OCI-LY7 (cell line): ENCODE measurements at regions of chr17 and their contacts with region 1.

Region 1: GRCh38 chr17:3048767-3049471 is 14.5 kb downstream of the OR1D5 start:
- DNase-seq: peak; percentile 99
- H3K4me3 ChIP-seq: peak overlapping the region; percentile 81
- H3K27ac ChIP-seq: peak overlapping the region; percentile 52
- H3K4me1 ChIP-seq: peaks cover 15% of the 10 kb centered on the region
- CTCF ChIP-seq: peak; percentile 94

Region 2: DNA sequence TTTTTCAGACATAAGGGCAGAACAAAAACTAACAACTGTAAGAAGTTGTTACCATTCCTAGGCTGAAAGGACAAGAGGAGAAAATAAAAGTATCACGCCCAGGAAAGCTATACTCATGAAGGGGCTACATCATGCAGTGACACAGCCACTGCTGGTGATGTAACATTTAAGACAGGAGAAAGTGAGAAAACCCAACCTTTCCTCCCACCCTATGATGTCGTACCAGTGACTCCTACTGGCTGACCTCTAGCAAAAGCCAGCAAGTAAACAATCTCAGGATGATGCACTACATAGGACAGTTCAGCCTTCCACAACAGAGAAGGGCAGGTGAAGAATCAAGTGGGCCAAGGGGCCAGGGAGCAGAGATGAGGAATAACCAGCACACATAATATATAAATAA is 398.7 kb after region 1 on chr17:
- CTCF ChIA-PET with region 1: no interaction called
- POLR2A ChIA-PET with region 1: no interaction called
- intact Hi-C with region 1: loop called (anchors 5 kb)
- DNase-seq: peak; percentile 25
- H3K4me3 ChIP-seq: no peak overlapping the region
- H3K27ac ChIP-seq: no peak overlapping the region
- H3K4me1 ChIP-seq: no peaks in the 10 kb centered on the region
- CTCF ChIP-seq: peak; percentile 72

Region 3: GRCh38 chr17:3535253-3535995 is 486.5 kb after region 1 on chr17:
- CTCF ChIA-PET with region 1: no interaction called
- POLR2A ChIA-PET with region 1: no interaction called
- intact Hi-C with region 1: loop called (anchors 5 kb)
- DNase-seq: peak; percentile 25
- H3K4me3 ChIP-seq: no peak overlapping the region
- H3K27ac ChIP-seq: no peak overlapping the region
- H3K4me1 ChIP-seq: no peaks in the 10 kb centered on the region
- CTCF ChIP-seq: peak; percentile 56

Region 4: DNA sequence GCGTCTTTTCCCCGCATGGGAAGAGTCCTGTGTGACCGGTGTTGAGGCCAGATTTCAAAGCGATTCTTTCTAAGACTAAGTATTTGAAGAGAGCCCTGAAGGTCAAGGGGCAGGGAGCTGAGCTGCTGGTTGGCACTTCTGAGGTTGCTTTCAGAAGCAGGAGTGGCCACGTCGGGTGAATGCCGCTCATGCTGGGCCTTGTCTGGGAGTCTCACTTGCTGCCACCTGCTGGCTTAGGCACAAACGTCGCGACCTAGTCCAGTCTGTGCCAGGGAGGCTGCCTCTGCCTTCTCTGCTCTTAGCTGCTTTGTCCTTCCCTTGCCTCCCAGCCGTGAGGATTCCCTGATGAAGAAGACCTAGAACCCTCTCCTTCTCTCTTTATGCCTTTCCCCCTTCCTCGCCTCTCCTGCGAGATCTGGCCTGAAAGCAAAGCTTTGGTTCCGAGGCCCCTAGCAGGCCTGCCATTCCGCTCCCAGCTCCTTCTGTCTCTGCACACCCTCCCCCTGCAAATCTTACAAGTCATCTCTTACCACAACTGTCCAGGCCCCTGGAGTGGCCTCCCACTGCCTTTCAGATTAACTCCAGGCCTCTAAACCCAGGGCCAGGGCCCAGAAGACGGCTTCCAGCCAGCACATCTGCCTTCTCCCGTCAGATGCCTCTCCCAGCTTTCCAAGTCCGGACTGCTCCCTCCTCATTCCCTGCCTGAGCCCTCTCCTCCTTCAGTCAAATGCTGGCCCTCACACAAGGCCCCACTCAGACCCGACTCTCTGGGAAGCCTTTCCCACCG is 599.0 kb after region 1 on chr17:
- CTCF ChIA-PET with region 1: no interaction called
- POLR2A ChIA-PET with region 1: no interaction called
- intact Hi-C with region 1: loop called (anchors 5 kb)
- DNase-seq: peak; percentile 78
- H3K4me3 ChIP-seq: no peak overlapping the region
- H3K27ac ChIP-seq: no peak overlapping the region
- H3K4me1 ChIP-seq: peaks cover 32% of the 10 kb centered on the region
- CTCF ChIP-seq: peak; percentile 76

Region 5: DNA sequence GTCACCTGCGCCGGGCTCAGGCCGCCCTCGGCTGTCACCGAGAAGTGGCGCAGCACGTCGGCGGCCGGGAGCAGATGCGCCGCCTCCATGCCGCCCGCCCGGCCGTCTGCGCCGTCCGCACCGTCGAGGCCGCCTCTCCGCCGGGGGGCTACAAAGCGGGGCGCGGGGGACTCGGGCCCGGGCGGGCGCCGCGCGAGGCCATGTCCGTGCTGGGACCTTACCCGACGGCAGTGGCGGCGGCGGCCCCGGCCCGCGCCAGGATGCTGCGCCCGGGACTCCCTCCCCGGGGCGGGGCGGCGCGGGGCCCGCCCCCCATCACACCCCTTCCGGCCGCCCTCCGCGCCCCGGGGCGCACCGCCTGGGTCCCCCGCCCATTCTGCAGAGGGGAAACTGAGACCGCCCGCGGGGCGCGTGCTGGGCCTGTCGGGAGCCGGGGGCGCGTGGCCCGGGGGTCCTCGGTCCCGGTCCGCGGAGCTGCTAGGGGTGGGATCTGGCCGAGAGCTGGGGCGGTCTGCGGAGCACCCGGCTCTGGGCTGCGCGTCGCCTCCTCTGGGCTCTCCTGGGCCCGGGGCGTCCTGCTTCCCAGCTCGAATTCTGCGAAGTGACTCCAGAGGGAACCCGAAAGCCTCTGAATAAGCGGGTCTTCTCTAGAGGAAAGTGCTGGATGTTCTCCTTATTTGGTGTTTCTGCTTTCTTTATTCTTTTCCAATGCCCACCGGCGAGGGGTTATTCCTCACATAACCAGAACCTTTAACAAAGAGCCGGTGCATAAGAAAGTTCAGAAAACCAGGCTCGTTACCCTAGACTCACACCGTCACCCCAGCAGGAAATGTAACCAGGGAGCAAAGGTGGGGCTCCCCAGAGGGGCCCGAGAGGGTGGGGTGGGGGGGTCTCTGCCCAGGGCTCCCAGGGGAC is 915.5 kb after region 1 on chr17 and contains the start of gene ATP2A3:
- CTCF ChIA-PET with region 1: no interaction called
- POLR2A ChIA-PET with region 1: no interaction called
- intact Hi-C with region 1: no loop called
- DNase-seq: peak; percentile 82
- H3K4me3 ChIP-seq: peak within 1 kb of the TSS; percentile 87
- H3K27ac ChIP-seq: peak within 1 kb of the TSS; percentile 94
- H3K4me1 ChIP-seq: peaks cover 59% of the 10 kb centered on the region
- CTCF ChIP-seq: no peak
- total RNA-seq, gene ATP2A3: 84.0 and 108 TPM in 2 replicates